PC-3 (cell line): ENCODE measurements at regions of chr9 and their contacts with region 1.

Region 1: GRCh38 chr9:92232190-92232589 is 61.3 kb downstream of the IARS1 start:
- DNase-seq: no peak
- ATAC-seq: no peak
- H3K4me3 ChIP-seq: no peak overlapping the region
- H3K27ac ChIP-seq: no peak overlapping the region
- H3K4me1 ChIP-seq: no peaks in the 10 kb centered on the region
- H3K27me3 ChIP-seq: no peaks in the 10 kb centered on the region
- CTCF ChIP-seq: no peak

Region 2: DNA sequence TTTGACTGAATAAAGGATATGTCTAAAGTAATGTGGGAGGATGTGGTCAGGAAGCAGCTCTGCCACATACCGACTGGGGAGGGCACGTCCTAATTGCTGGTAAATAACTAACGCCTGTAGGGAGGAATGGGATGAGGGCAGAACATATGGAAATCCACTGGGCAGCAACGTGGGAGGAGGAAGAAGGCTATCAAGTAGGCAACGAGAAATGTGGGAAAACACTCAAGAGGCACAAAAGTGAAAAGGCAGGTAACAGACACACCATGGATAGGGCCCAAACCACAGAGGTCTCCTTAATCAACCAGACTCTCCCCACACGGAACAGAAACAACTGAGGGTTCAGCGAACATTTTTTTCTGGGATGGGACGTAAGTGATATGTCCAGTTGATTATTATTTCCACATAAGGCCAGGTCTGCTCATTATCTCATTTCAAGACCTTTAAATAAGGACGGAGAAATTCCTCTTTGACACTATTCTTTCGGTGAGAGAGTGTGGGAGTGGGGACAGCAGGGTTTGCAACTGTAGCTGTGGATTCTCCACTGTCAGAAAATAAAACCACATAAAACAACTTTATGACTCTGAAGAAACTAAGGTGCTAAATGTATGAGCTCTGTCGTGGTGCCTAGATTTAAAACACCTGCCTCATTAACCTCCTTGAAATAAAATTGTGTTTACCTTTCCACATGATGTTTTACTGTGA is 44.3 kb after region 1 on chr9:
- CTCF ChIA-PET with region 1: no interaction called
- POLR2A ChIA-PET with region 1: no interaction called
- intact Hi-C with region 1: loop called (anchors 5 kb)
- DNase-seq: no peak
- ATAC-seq: no peak
- H3K4me3 ChIP-seq: no peak overlapping the region
- H3K27ac ChIP-seq: no peak overlapping the region
- H3K4me1 ChIP-seq: no peaks in the 10 kb centered on the region
- H3K27me3 ChIP-seq: no peaks in the 10 kb centered on the region
- CTCF ChIP-seq: no peak